Stomach (tissue), 19 donors: ENCODE measurements at regions of chr3 and their contacts with region 1.

Region 1: DNA sequence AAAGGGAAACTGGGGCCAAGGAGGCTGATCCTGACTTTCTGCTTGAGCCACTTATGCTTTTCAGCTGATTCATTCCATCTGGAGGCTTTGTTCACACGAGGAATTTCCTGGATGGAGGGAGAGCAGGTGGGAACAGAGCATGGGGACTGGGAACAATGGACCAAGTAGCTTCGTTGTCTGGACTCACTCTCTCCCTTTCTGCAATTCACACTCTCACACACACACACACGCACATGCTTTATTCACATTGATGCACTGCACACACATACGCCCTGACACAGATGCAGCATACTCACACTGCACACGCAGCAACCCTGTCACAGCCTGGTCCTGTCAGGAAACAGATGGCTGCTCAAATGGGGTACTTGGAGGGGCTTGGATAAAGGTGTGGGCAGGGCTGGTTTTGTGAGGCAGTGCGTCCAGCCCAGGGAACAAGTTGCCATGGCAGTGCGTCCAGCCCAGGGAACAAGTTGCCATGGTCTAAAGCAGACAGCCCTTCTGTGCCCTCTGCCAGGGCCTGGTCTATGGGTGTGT is 19.8 kb upstream of the CHCHD6 start:
- DNase-seq: peak in 1 of 2 donors; percentile 59
- H3K4me3 ChIP-seq: no peak overlapping the region
- H3K27ac ChIP-seq: no peak overlapping the region
- H3K4me1 ChIP-seq: peaks cover 0 to 9% (median 3%) of the 10 kb centered on the region in 4 donors
- H3K27me3 ChIP-seq: peaks cover 0 to 5% (median 0%) of the 10 kb centered on the region in 3 donors
- CTCF ChIP-seq: no peak
- EP300 ChIP-seq: no peak
- POLR2A ChIP-seq: no peak

Region 2: DNA sequence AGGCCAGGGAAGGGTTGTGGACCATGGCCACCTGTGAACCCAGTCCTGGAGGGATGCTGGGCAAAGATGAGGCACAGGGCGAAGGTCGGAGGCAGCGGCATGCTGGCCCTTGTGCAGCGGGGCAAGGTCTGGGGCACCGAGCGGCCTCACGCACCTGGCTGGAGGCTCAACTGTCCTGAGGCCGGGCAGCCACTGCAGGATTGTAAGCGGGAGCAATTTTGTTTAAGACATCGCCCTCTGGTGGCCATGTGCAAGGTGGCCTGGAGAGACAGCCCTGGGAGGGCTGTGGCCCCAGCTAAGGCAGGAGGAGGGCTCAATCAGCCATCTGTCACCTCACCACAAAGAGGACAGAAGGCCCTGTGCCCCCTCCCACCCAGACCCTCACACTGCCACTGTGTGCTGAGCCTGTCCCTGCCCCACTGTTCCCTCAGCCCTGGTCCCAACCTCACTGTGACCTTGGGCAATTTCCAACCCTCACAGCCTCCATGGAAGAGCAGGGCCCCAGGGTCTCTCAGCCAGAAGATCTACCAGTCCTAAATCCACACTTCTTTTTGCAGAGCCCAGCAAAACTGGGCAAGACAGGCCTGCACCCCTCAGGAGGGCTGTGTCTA is 860.0 kb after region 1 on chr3:
- intact Hi-C with region 1: loop called (anchors 10 kb)
- DNase-seq: peak; percentile 89 to 92
- H3K4me3 ChIP-seq: no peak overlapping the region
- H3K27ac ChIP-seq: peak overlapping the region; percentile 81 to 91 (median 88)
- H3K4me1 ChIP-seq: peaks cover 45 to 59% (median 55%) of the 10 kb centered on the region in 4 donors
- H3K27me3 ChIP-seq: no peaks in the 10 kb centered on the region
- CTCF ChIP-seq: peak in 5 of 7 experiments; percentile 59 to 91 (median 78)
- EP300 ChIP-seq: no peak
- POLR2A ChIP-seq: no peak